ENCODE measurements at regions of chr2 and their contacts with region 1.

Region 1: DNA sequence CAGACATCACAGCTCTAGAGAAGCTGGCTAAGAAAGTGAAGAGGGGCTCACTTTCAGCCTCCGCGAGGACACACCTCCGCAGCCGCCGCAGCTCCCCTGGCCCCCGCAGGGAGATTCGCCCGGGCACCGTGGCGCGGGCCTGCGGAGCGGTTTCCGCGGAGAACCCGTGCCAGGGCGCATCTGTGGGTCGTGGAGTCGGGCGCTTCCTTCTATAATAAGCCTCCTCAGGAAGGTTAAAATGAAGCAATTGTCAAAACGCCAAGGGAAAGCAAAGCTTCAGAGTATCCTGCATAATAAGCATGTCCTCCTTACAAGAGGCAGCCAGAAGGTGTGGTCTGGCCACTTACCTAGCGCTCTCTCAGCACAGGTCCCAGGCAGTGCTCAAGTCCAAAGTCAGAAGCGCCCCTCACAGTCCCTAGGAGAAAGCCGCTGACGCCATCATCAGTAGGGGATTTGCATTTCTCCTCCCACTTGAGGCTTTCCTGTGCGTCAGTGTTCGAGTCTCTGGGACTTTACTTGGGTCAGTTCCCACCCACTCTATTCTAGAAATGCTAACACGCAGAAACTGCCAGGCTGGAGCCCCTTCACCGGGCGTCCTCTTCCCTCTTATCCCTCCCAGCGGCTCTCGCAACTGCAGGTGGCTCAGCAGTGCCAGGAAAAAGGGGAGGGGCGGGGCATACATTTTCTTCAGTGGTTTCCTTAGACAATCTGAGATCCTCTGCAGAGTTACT is at the start of gene STAT4:
- DNase-seq: peak; percentile 91
- ATAC-seq: peak; percentile 87
- H3K4me3 Mint-ChIP-seq: peak within 1 kb of the TSS; percentile 93
- H3K27ac Mint-ChIP-seq: peak within 1 kb of the TSS; percentile 96
- H3K4me1 Mint-ChIP-seq: peaks cover 70% of the 10 kb centered on the region
- H3K27me3 Mint-ChIP-seq: no peaks in the 10 kb centered on the region
- total RNA-seq, gene STAT4: 48.8 to 59.5 TPM

Region 2: GRCh38 chr2:190843874-190844699 is 306.7 kb before region 1 on chr2:
- CTCF ChIA-PET with region 1: no interaction called
- POLR2A ChIA-PET with region 1: no interaction called
- intact Hi-C with region 1: loop called in 1 of 2 experiments (anchors 5 kb)
- DNase-seq: peak; percentile 74
- ATAC-seq: peak; percentile 87
- H3K4me3 Mint-ChIP-seq: peak overlapping the region; percentile 43
- H3K27ac Mint-ChIP-seq: peak overlapping the region; percentile 82
- H3K4me1 Mint-ChIP-seq: peaks cover 45% of the 10 kb centered on the region
- H3K27me3 Mint-ChIP-seq: no peaks in the 10 kb centered on the region

Region 3: GRCh38 chr2:191020221-191020741 is 130.5 kb before region 1 on chr2:
- CTCF ChIA-PET with region 1: interaction called, 6 read pairs
- POLR2A ChIA-PET with region 1: interaction called, 3 read pairs
- intact Hi-C with region 1: loop called in 1 of 2 experiments (anchors 1 kb)
- DNase-seq: peak; percentile 96
- ATAC-seq: peak; percentile 62
- H3K4me3 Mint-ChIP-seq: no peak overlapping the region
- H3K27ac Mint-ChIP-seq: no peak overlapping the region
- H3K4me1 Mint-ChIP-seq: peaks cover 37% of the 10 kb centered on the region
- H3K27me3 Mint-ChIP-seq: no peaks in the 10 kb centered on the region

Region 4: DNA sequence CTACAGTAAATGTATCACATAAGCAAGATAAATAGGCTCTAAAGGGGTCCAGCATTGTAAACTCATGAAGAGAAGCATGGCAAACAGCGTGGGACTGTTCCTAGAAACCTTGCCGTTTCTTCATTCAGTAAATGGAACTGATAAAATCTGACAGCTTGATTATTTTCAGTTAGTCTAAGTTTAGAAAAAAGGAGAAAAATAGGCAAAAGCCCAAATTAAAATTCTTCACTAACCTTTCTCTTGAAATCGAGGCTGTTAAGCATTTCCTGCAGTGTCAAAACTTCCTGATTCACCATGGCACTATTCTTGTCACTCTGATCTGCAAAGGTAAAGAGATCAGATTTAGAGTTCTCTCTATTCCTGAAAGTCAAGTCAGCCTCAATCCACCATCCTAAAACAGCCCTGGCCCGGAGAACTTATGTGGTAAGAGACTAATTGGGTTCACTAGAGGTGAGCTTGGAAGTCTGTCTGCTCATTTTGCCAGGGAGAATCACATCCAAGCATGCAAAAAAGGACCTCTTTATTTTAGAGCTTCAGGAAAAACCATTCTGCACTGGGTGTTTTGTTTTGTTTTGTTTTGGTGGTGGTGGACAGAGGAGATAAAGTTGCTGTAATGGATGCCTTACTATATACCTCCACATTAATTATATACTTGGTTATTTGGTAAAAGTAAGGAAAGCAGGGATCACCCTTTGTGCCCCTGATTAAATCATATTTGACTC is 84.4 kb before region 1 on chr2:
- CTCF ChIA-PET with region 1: interaction called, 11 read pairs
- POLR2A ChIA-PET with region 1: interaction called, 3 read pairs
- intact Hi-C with region 1: no loop called
- DNase-seq: no peak
- ATAC-seq: peak; percentile 53
- H3K4me3 Mint-ChIP-seq: peak overlapping the region; percentile 47
- H3K27ac Mint-ChIP-seq: peak overlapping the region; percentile 66
- H3K4me1 Mint-ChIP-seq: peaks cover 72% of the 10 kb centered on the region
- H3K27me3 Mint-ChIP-seq: no peaks in the 10 kb centered on the region

Region 5: DNA sequence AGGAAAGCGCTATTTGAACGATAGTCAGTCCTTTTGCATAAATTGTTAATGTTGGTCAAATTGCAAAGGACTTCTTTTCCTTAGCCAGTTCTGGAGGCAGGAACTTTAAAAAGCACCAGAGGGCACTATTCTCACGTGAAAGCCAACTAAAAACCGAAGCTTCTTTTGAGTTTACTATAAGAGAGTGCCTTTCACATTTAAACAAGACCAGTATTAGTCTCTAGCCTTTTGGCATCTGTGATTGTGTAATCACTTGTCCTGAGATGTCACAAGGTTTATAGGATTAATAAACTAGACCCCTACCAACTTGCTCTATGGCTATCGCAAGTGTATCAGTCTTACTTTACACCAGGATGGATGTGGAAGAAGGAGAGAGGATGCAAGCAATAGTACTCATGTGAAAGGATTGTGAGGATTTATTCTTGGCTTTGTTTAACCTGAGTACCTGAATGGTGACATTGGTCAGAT is 14.4 kb after region 1 on chr2:
- CTCF ChIA-PET with region 1: interaction called, 25 read pairs
- POLR2A ChIA-PET with region 1: no interaction called
- intact Hi-C with region 1: no loop called
- DNase-seq: peak; percentile 42
- ATAC-seq: peak; percentile 76
- H3K4me3 Mint-ChIP-seq: no peak overlapping the region
- H3K27ac Mint-ChIP-seq: peak overlapping the region; percentile 52
- H3K4me1 Mint-ChIP-seq: peaks cover 22% of the 10 kb centered on the region
- H3K27me3 Mint-ChIP-seq: peaks cover 8% of the 10 kb centered on the region

Region 6: DNA sequence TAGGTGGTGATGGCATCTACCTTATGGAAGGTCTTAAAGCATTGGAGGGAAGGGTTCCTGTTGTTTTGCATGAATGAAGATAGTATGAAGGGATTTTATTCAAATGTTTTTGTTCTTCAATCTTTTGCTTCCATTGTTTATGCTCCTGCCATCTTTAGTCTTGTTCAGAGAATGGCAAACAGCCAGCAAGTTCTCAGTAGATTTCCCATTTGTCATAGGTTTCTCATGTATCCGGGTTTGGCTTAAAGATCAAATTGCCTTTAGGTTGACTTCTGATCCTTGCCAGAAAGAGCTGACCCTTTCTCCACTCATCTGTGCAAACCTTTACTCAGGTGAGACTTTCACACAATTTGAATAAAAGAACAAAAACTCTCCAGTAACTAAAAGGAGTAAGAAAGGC is 44.3 kb after region 1 on chr2:
- CTCF ChIA-PET with region 1: interaction called, 10 read pairs
- POLR2A ChIA-PET with region 1: no interaction called
- intact Hi-C with region 1: loop called in 1 of 2 experiments (anchors 1 kb)
- DNase-seq: no peak
- ATAC-seq: no peak
- H3K4me3 Mint-ChIP-seq: no peak overlapping the region
- H3K27ac Mint-ChIP-seq: peak overlapping the region; percentile 98
- H3K4me1 Mint-ChIP-seq: peaks cover 57% of the 10 kb centered on the region
- H3K27me3 Mint-ChIP-seq: no peaks in the 10 kb centered on the region

Region 7: DNA sequence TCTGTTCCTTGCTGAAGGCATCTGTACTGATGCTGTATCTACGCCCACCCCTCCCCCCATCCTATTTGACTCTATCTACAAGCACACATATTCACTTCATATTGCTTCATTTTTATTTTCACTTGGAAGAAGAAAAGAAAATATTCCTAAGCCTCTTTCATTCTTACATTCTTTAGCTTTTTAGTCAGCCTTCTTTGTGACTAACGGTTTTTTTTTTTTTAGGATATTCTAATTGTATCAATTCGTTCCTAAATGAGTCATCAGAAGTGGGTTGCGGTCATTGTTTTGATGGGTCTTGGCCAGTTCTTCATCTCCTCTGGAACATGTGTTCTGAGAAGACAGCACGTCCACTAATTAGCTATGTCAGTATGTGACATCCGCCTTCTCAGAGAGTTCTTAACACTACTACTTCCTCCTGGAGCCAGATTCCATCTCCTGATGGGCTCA is 183.2 kb after region 1 on chr2:
- CTCF ChIA-PET with region 1: no interaction called
- POLR2A ChIA-PET with region 1: no interaction called
- intact Hi-C with region 1: no loop called
- DNase-seq: no peak
- ATAC-seq: no peak
- H3K4me3 Mint-ChIP-seq: no peak overlapping the region
- H3K27ac Mint-ChIP-seq: no peak overlapping the region
- H3K4me1 Mint-ChIP-seq: no peaks in the 10 kb centered on the region
- H3K27me3 Mint-ChIP-seq: peaks cover 4% of the 10 kb centered on the region

Region 8: GRCh38 chr2:191677646-191678436 is 527.1 kb after region 1 on chr2 and contains the start of gene NABP1:
- CTCF ChIA-PET with region 1: no interaction called
- POLR2A ChIA-PET with region 1: interaction called, 3 read pairs
- intact Hi-C with region 1: loop called in 1 of 2 experiments (anchors 1 kb)
- DNase-seq: peak; percentile 100
- ATAC-seq: peak; percentile 79
- H3K4me3 Mint-ChIP-seq: peak within 1 kb of the TSS; percentile 97
- H3K27ac Mint-ChIP-seq: peak within 1 kb of the TSS; percentile 99
- H3K4me1 Mint-ChIP-seq: peaks cover 45% of the 10 kb centered on the region
- H3K27me3 Mint-ChIP-seq: no peaks in the 10 kb centered on the region
- total RNA-seq, gene NABP1: 52.4 to 53.9 TPM

Measured in activated CD4-positive, alpha-beta T cell treated with anti-CD3 and anti-CD28 coated beads for 36 hours (primary cell).